ENCODE measurements at regions of chr11 and their contacts with region 1.

Region 1: DNA sequence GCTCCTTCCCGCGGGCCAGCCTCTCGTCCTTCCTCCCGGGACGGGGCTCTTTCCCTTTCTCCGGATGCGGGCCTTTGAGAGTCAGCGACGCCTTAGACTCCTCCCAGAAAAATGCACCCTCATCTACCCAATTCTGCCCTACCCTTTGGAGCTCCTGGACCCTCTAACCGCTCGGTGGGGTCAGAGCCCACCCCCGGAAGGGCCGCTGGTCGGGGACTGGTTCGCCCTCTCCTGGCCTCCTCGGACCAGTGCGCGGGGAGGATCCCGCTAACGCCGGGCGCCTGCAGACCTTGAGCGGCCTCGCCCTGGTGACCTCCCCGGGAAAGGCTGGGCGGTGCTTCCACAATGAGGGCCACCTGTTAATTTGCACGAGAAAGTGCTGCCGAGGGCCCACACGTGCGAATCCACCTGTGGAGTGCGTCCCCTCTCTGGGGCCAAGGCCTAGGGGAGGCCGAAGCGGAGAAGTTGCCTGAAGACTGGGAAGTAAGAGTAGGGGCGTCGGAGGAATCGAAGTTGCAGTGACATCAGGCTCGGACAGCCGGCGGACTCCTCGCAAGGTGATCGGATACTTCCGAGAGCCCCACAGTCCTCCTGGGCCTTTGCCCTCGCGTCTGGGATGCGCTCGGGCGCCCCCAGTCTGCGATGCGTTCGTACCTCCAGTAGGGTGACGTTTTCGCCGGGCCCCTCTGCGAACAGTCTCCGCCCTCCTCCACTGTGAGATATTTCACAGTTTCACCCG is 61.5 kb downstream of the ENDOD1 start:
- DNase-seq: peak; percentile 85 to 97
- ATAC-seq: peak; percentile 92 to 98 (median 93)
- H3K4me3 ChIP-seq: peak overlapping the region; percentile 73
- H3K4me3 Mint-ChIP-seq: peak overlapping the region; percentile 90
- H3K27ac ChIP-seq: peak overlapping the region; percentile 81
- H3K27ac Mint-ChIP-seq: peak overlapping the region; percentile 91 to 94
- H3K4me1 ChIP-seq: peaks cover 42% of the 10 kb centered on the region
- H3K4me1 Mint-ChIP-seq: peaks cover 27 to 40% of the 10 kb centered on the region in 2 donors
- H3K27me3 ChIP-seq: no peaks in the 10 kb centered on the region
- H3K27me3 Mint-ChIP-seq: peaks cover 7 to 12% of the 10 kb centered on the region in 2 donors
- CTCF ChIP-seq: peak; percentile 81

Region 2: GRCh38 chr11:94973099-94973968 is 177.8 kb before region 1 on chr11 and contains the starts of genes CWC15 and KDM4D:
- intact Hi-C with region 1: loop called (anchors 2 kb)
- DNase-seq: peak; percentile 88 to 97
- ATAC-seq: peak; percentile 98 to 100 (median 99)
- H3K4me3 ChIP-seq: peak within 1 kb of the TSS; percentile 68
- H3K4me3 Mint-ChIP-seq: peak within 1 kb of the TSS; percentile 99
- H3K27ac ChIP-seq: peak within 1 kb of the TSS; percentile 71
- H3K27ac Mint-ChIP-seq: peak within 1 kb of the TSS; percentile 91 to 98
- H3K4me1 ChIP-seq: peaks cover 4% of the 10 kb centered on the region
- H3K4me1 Mint-ChIP-seq: peaks cover 25 to 35% of the 10 kb centered on the region in 2 donors
- H3K27me3 ChIP-seq: no peaks in the 10 kb centered on the region
- H3K27me3 Mint-ChIP-seq: peaks cover 15 to 17% of the 10 kb centered on the region in 2 donors
- CTCF ChIP-seq: no peak
- total RNA-seq, gene CWC15: 76.8 to 90.7 (median 81.3) TPM
- total RNA-seq, gene KDM4D: 0.14 to 0.32 TPM in 2 of 3 donors, not detected in the other

Region 3: GRCh38 chr11:95089620-95090542 is 61.2 kb before region 1 on chr11 and contains the start of gene ENDOD1:
- intact Hi-C with region 1: loop called (anchors 1 kb)
- DNase-seq: peak; percentile 78 to 92
- ATAC-seq: peak; percentile 93 to 98 (median 93)
- H3K4me3 ChIP-seq: peak within 1 kb of the TSS; percentile 83
- H3K4me3 Mint-ChIP-seq: peak within 1 kb of the TSS; percentile 95
- H3K27ac ChIP-seq: peak within 1 kb of the TSS; percentile 86
- H3K27ac Mint-ChIP-seq: peak within 1 kb of the TSS; percentile 94 to 97
- H3K4me1 ChIP-seq: peaks cover 21% of the 10 kb centered on the region
- H3K4me1 Mint-ChIP-seq: peaks cover 40 to 44% of the 10 kb centered on the region in 2 donors
- H3K27me3 ChIP-seq: no peaks in the 10 kb centered on the region
- H3K27me3 Mint-ChIP-seq: peaks cover 0 to 1% of the 10 kb centered on the region in 2 donors
- CTCF ChIP-seq: no peak
- total RNA-seq, gene ENDOD1: 10.1 to 15.5 (median 14.0) TPM

Region 4: DNA sequence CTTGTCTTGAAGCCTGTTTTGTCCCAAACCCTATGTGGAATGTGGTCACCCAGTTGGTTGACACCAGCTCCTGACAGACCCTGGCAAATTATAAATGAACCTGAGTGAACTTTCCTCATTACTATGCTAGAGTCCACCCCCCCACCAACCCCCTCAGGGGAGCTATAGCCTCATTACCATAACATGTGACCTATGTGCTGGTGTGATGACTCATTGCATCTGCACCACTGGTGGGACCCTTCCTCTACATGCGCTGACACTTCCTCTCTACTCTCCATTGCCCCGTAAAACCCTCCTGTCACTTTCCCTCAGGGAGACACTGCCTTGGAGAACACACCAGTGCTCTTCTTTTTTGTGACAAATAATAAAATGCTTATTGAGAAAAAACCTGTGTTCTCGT is 184.9 kb after region 1 on chr11:
- intact Hi-C with region 1: no loop called
- DNase-seq: no peak
- ATAC-seq: no peak
- H3K4me3 ChIP-seq: no peak overlapping the region
- H3K4me3 Mint-ChIP-seq: no peak overlapping the region
- H3K27ac ChIP-seq: no peak overlapping the region
- H3K27ac Mint-ChIP-seq: no peak overlapping the region
- H3K4me1 ChIP-seq: peaks cover 7% of the 10 kb centered on the region
- H3K4me1 Mint-ChIP-seq: peaks cover 0 to 6% of the 10 kb centered on the region in 2 donors
- H3K27me3 ChIP-seq: no peaks in the 10 kb centered on the region
- H3K27me3 Mint-ChIP-seq: no peaks in the 10 kb centered on the region
- CTCF ChIP-seq: no peak

Region 5: GRCh38 chr11:95435628-95436353 is 284.7 kb after region 1 on chr11:
- intact Hi-C with region 1: loop called (anchors 10 kb)
- DNase-seq: no peak
- ATAC-seq: peak in 1 of 3 donors; percentile 13
- H3K4me3 ChIP-seq: no peak overlapping the region
- H3K4me3 Mint-ChIP-seq: peak overlapping the region; percentile 40
- H3K27ac ChIP-seq: no peak overlapping the region
- H3K27ac Mint-ChIP-seq: peak overlapping the region; percentile 28 to 51
- H3K4me1 ChIP-seq: peaks cover 9% of the 10 kb centered on the region
- H3K4me1 Mint-ChIP-seq: peaks cover 22 to 27% of the 10 kb centered on the region in 2 donors
- H3K27me3 ChIP-seq: no peaks in the 10 kb centered on the region
- H3K27me3 Mint-ChIP-seq: peaks cover 0 to 3% of the 10 kb centered on the region in 2 donors
- CTCF ChIP-seq: no peak

Region 6: GRCh38 chr11:95764267-95764898 is 613.3 kb after region 1 on chr11:
- intact Hi-C with region 1: loop called (anchors 1 kb)
- DNase-seq: peak in 1 of 2 donors; percentile 76
- ATAC-seq: peak; percentile 74 to 90 (median 77)
- H3K4me3 ChIP-seq: no peak overlapping the region
- H3K4me3 Mint-ChIP-seq: no peak overlapping the region
- H3K27ac ChIP-seq: no peak overlapping the region
- H3K27ac Mint-ChIP-seq: no peak overlapping the region
- H3K4me1 ChIP-seq: no peaks in the 10 kb centered on the region
- H3K4me1 Mint-ChIP-seq: no peaks in the 10 kb centered on the region
- H3K27me3 ChIP-seq: no peaks in the 10 kb centered on the region
- H3K27me3 Mint-ChIP-seq: peaks cover 8 to 30% of the 10 kb centered on the region in 2 donors
- CTCF ChIP-seq: peak; percentile 80

Measured in natural killer cell (primary cell).